ENCODE measurements at regions of chr1 and their contacts with region 1.

Region 1: DNA sequence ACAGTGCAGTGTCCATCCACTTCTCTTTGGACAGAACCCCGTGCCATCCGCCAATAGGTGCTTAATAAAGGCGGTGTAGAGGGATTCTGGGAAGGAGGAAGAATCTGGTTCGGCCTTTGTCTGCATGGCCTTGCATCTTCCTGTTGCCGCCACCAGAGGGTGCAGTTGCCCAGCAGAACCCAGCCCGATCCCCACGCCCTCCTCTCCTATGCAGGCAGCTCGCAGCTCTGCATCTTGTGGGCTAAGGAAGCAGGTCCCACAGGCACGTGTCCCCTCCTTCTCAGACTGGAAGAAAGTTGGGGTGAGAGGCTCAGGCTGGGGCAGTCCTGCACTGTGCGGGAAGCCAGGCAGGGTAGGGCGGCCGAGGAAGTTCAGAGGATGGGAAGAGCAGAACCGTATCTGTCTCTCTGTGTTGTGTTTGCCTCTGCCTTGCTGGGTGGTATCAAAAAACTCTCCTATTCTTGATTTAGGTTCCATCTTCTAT is 20.8 kb downstream of the NAV1 start:
- DNase-seq: peak; percentile 81
- H3K4me3 ChIP-seq: no peak overlapping the region
- H3K27ac ChIP-seq: no peak overlapping the region
- H3K4me1 ChIP-seq: peaks cover 0 to 35% (median 10%) of the 10 kb centered on the region in 4 donors
- H3K27me3 ChIP-seq: no peaks in the 10 kb centered on the region
- CTCF ChIP-seq: peak; percentile 87 to 98 (median 94)
- EP300 ChIP-seq: no peak
- POLR2A ChIP-seq: no peak

Region 2: GRCh38 chr1:201309426-201309825 is 250.3 kb before region 1 on chr1:
- in situ Hi-C with region 1: no loop called
- intact Hi-C with region 1: no loop called
- DNase-seq: peak; percentile 82
- H3K4me3 ChIP-seq: no peak overlapping the region
- H3K27ac ChIP-seq: no peak overlapping the region
- H3K4me1 ChIP-seq: peaks cover 8 to 28% (median 24%) of the 10 kb centered on the region in 4 donors
- H3K27me3 ChIP-seq: no peaks in the 10 kb centered on the region
- CTCF ChIP-seq: peak in 2 of 5 experiments; percentile 8 to 11
- EP300 ChIP-seq: no peak
- POLR2A ChIP-seq: no peak

Region 3: GRCh38 chr1:201696217-201696761 is 136.6 kb after region 1 on chr1:
- in situ Hi-C with region 1: loop called in 1 of 4 experiments (anchors 10 kb)
- intact Hi-C with region 1: loop called (anchors 1 kb)
- DNase-seq: peak; percentile 55
- H3K4me3 ChIP-seq: no peak overlapping the region
- H3K27ac ChIP-seq: peak overlapping the region; percentile 9 to 62 (median 58)
- H3K4me1 ChIP-seq: peaks cover 7 to 43% (median 30%) of the 10 kb centered on the region in 4 donors
- H3K27me3 ChIP-seq: no peaks in the 10 kb centered on the region
- CTCF ChIP-seq: no peak
- EP300 ChIP-seq: no peak
- POLR2A ChIP-seq: no peak

Region 4: GRCh38 chr1:201703621-201704439 is 144.1 kb after region 1 on chr1:
- in situ Hi-C with region 1: loop called in 3 of 4 experiments (anchors 5 to 10 kb)
- intact Hi-C with region 1: loop called (anchors 1 kb)
- DNase-seq: peak; percentile 85
- H3K4me3 ChIP-seq: no peak overlapping the region
- H3K27ac ChIP-seq: peak overlapping the region; percentile 63 to 78 (median 72)
- H3K4me1 ChIP-seq: peaks cover 14 to 22% (median 18%) of the 10 kb centered on the region in 4 donors
- H3K27me3 ChIP-seq: no peaks in the 10 kb centered on the region
- CTCF ChIP-seq: peak; percentile 93 to 97 (median 97)
- EP300 ChIP-seq: no peak
- POLR2A ChIP-seq: no peak

Region 5: DNA sequence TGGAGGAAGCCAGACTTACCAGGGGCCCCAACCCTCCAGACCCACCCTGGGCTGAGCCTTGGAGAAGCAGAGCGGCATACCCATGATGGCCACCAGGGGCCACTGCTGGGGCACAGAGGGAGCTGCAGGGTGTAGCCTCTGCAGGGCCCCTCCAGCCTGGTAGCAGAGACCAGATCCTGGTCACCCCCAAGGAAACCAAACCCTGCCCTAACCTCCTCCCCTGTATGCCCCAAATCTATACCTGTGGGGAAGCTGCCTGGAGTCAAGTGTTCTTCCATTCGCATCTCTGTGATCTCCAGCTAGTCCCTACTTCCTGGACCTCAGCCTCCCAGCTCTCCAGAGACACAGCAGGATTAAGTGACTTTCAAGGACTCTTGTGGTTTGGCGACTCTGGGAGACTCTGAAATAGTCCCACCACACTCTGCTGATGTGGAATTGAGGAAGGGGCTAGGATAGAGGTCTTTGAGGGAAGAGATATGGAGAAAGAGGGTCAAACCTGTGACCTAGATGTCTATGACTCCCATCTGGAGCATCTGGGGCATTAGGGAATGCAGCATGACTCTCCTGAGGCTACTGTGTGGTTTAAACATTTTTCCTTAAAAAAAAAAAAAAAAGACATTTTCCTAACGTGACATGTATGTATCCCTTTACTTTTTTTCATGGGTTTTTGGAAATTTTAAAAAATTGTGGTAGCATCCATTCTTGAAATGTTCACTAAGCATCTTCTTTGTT is 150.0 kb after region 1 on chr1:
- in situ Hi-C with region 1: loop called in 2 of 4 experiments (anchors 5 kb)
- intact Hi-C with region 1: no loop called
- DNase-seq: peak; percentile 77
- H3K4me3 ChIP-seq: no peak overlapping the region
- H3K27ac ChIP-seq: peak overlapping the region in 2 of 4 donors; percentile 15 to 49
- H3K4me1 ChIP-seq: peaks cover 32 to 46% (median 38%) of the 10 kb centered on the region in 4 donors
- H3K27me3 ChIP-seq: no peaks in the 10 kb centered on the region
- CTCF ChIP-seq: peak; percentile 87 to 92 (median 91)
- EP300 ChIP-seq: no peak
- POLR2A ChIP-seq: no peak

Region 6: GRCh38 chr1:201783572-201783971 is 223.9 kb after region 1 on chr1:
- in situ Hi-C with region 1: loop called in 3 of 4 experiments (anchors 10 to 25 kb)
- intact Hi-C with region 1: no loop called
- DNase-seq: no peak
- H3K4me3 ChIP-seq: no peak overlapping the region
- H3K27ac ChIP-seq: no peak overlapping the region
- H3K4me1 ChIP-seq: peaks cover 0 to 9% (median 3%) of the 10 kb centered on the region in 4 donors
- H3K27me3 ChIP-seq: no peaks in the 10 kb centered on the region
- CTCF ChIP-seq: no peak
- EP300 ChIP-seq: no peak
- POLR2A ChIP-seq: no peak

Region 7: DNA sequence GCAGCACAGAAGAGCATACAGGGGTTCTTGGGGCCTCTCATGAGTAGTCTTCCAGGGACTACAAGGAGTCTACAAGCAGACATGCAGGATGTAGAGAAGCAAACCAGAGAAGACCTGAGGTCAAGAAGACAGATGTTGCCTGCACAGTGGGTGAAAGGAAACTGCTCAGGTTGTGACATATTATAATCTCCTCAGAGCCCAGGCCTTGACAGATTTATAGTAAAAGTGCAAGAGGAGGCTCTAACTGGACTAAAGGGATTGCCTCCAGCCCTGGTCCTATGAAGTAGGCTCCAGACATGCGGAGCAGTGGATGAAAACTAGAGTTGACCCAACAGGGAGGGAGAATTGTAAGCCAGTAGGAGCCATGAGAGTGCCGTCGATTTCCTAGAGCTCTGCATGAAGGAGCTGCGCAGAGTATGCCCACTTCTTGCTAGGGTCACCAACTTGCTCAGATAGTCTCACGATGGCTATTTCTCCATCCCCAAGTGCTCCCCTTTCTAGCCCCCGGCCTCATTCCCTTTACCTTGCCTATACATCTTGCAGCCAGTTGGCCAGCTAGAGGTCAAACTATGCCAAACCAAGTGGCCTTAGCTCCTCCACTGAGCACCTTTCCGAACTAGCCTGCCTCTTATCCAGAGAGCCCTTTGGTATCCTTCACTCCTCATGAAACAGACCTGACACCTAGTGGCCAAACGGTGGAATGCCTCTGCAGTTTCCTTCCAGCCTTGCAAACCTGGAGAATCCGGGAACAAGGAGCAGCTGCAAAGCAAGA is 233.0 kb after region 1 on chr1:
- in situ Hi-C with region 1: loop called (anchors 5 to 25 kb)
- intact Hi-C with region 1: loop called (anchors 10 kb)
- DNase-seq: peak; percentile 78
- H3K4me3 ChIP-seq: no peak overlapping the region
- H3K27ac ChIP-seq: peak overlapping the region; percentile 57 to 81 (median 74)
- H3K4me1 ChIP-seq: peaks cover 13 to 33% (median 19%) of the 10 kb centered on the region in 4 donors
- H3K27me3 ChIP-seq: no peaks in the 10 kb centered on the region
- CTCF ChIP-seq: peak; percentile 93 to 98 (median 96)
- EP300 ChIP-seq: no peak
- POLR2A ChIP-seq: no peak